Heart left ventricle (tissue), 16 donors: ENCODE measurements at regions of chr20 and their contacts with region 1.

Region 1: GRCh38 chr20:19692685-19693119 is 65.4 kb upstream of the RIN2 start:
- DNase-seq: peak; percentile 37 to 69 (median 52)
- ATAC-seq: peak in 2 of 4 donors; percentile 29 to 33
- H3K4me3 ChIP-seq: peak overlapping the region in 1 of 12 donors; percentile 12
- H3K27ac ChIP-seq: no peak overlapping the region
- H3K4me1 ChIP-seq: peaks cover 0 to 36% (median 15%) of the 10 kb centered on the region in 12 donors
- H3K27me3 ChIP-seq: no peaks in the 10 kb centered on the region
- CTCF ChIP-seq: peak; percentile 39 to 97 (median 92)
- POLR2A ChIP-seq: no peak

Region 2: GRCh38 chr20:19241440-19241839 is 451.3 kb before region 1 on chr20:
- intact Hi-C with region 1: no loop called
- DNase-seq: no peak
- ATAC-seq: no peak
- H3K4me3 ChIP-seq: no peak overlapping the region
- H3K27ac ChIP-seq: no peak overlapping the region
- H3K4me1 ChIP-seq: no peaks in the 10 kb centered on the region
- H3K27me3 ChIP-seq: peaks cover 0 to 12% (median 0%) of the 10 kb centered on the region in 9 donors
- CTCF ChIP-seq: no peak
- POLR2A ChIP-seq: no peak

Region 3: DNA sequence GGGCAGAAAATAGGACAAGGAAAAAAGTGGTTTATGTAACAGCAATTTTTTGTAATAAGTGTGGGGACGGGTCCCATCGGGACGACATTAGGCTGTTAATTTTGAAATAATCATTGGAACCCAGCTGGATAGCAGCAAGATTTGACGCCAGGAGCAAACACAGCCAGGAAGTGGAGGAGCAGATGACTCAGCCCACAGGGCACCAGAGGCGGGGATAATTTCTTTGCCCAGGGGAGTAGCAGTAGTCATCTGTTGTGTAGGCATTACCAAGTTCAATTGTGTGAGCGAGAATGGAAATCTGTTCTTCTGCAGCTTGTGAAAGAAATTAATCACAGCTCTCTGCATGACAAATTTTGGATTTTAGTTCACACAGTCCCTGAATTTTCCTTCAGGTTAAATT is 42.7 kb after region 1 on chr20:
- intact Hi-C with region 1: loop called in 2 of 10 experiments (anchors 5 kb)
- DNase-seq: peak; percentile 69 to 80 (median 75)
- ATAC-seq: peak; percentile 87 to 97 (median 94)
- H3K4me3 ChIP-seq: no peak overlapping the region
- H3K27ac ChIP-seq: peak overlapping the region in 11 of 12 donors; percentile 44 to 78 (median 63)
- H3K4me1 ChIP-seq: peaks cover 0 to 31% (median 16%) of the 10 kb centered on the region in 12 donors
- H3K27me3 ChIP-seq: no peaks in the 10 kb centered on the region
- CTCF ChIP-seq: no peak
- POLR2A ChIP-seq: no peak

Region 4: DNA sequence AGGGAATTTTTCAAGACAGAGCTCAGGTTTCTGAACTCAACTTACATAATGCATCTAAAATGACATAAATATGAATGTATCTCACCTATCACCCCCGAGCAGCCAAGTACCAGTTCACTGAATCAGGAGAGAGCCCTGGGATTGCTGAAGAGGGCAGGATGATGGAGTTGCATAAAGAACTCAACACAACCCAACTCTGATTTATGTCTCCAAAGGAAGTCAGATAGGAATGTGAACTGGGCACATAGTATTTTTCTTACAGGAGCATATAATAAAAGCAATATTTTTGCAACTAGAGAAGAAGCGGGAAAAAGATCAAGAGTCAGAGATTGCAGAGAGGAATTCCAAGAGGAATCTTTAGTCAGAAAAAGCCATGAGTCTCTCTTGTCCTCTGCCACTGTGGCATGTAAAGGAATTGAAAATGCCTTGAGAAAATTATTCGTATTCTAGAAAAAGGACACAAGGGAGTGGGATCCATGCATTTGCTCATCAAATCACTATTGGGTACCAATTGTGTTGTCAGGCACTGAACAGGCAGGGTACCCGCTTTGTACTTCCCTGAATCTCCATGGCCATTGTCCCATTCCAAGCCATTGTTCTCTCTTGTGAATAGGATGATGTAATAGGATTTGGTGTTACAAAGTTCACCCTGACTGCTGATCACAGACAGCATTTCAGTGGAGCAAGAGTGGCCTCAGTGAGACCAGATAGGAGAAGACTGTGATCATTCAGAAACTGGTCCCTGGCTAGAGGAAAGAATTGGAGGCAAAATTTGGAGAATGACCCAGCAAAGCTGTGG is 81.6 kb after region 1 on chr20:
- intact Hi-C with region 1: no loop called
- DNase-seq: peak in 1 of 5 donors; percentile 21
- ATAC-seq: peak in 3 of 4 donors; percentile 33 to 68 (median 54)
- H3K4me3 ChIP-seq: no peak overlapping the region
- H3K27ac ChIP-seq: peak overlapping the region in 9 of 12 donors; percentile 2 to 76 (median 29)
- H3K4me1 ChIP-seq: peaks cover 21 to 82% (median 57%) of the 10 kb centered on the region in 12 donors
- H3K27me3 ChIP-seq: no peaks in the 10 kb centered on the region
- CTCF ChIP-seq: no peak
- POLR2A ChIP-seq: no peak

Region 5: DNA sequence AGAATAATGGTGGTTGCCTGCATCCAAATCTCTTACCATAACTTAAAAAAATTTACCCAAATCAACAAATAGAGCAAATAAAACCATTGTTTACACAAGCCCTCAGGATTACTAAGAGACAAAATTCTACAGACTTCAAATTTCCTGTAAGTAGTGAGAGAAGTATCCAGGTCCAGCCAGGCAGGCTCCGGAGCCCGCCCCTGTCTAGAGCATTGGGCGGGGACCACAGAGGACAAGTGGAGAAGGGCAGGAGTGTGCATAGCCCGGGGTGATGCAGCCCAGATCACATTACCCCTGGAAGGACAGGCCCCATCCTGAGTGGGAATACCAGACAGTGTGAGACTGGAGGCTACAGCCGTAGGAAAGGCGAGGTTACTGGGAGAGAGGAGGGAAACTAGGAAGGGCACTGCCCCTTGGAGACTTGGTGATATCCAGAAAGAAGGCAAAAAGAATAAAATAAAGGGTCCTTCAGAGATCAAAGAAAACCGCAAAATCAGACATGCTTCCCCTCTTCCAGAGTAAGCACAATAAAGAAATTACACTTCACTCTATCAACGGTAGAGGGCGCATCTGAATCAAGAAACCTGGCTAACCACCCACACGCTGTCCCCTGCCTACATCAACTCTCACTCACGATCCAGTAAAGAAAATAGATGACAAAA is 91.9 kb after region 1 on chr20:
- intact Hi-C with region 1: loop called in 5 of 10 experiments (anchors 1 to 10 kb)
- DNase-seq: peak in 4 of 5 donors; percentile 64 to 78 (median 73)
- ATAC-seq: peak; percentile 67 to 79 (median 72)
- H3K4me3 ChIP-seq: peak overlapping the region in 2 of 12 donors; percentile 5 to 6
- H3K27ac ChIP-seq: peak overlapping the region; percentile 69 to 91 (median 84)
- H3K4me1 ChIP-seq: peaks cover 12 to 68% (median 46%) of the 10 kb centered on the region in 12 donors
- H3K27me3 ChIP-seq: no peaks in the 10 kb centered on the region
- CTCF ChIP-seq: peak; percentile 65 to 87 (median 81)
- POLR2A ChIP-seq: no peak

Region 6: GRCh38 chr20:19815553-19815991 is 122.9 kb after region 1 on chr20:
- intact Hi-C with region 1: no loop called
- DNase-seq: peak in 4 of 5 donors; percentile 55 to 70 (median 62)
- ATAC-seq: peak; percentile 78 to 96 (median 94)
- H3K4me3 ChIP-seq: no peak overlapping the region
- H3K27ac ChIP-seq: peak overlapping the region in 11 of 12 donors; percentile 35 to 78 (median 62)
- H3K4me1 ChIP-seq: peaks cover 2 to 54% (median 36%) of the 10 kb centered on the region in 12 donors
- H3K27me3 ChIP-seq: no peaks in the 10 kb centered on the region
- CTCF ChIP-seq: peak in 4 of 12 donors; percentile 10 to 34 (median 18)
- POLR2A ChIP-seq: no peak

Region 7: GRCh38 chr20:19889011-19889953 is 196.6 kb after region 1 on chr20:
- intact Hi-C with region 1: loop called in 5 of 10 experiments (anchors 2 to 10 kb)
- DNase-seq: peak; percentile 71 to 83 (median 76)
- ATAC-seq: peak; percentile 65 to 85 (median 74)
- H3K4me3 ChIP-seq: peak overlapping the region; percentile 3 to 61 (median 52)
- H3K27ac ChIP-seq: peak overlapping the region; percentile 71 to 97 (median 89)
- H3K4me1 ChIP-seq: peaks cover 10 to 86% (median 65%) of the 10 kb centered on the region in 12 donors
- H3K27me3 ChIP-seq: no peaks in the 10 kb centered on the region
- CTCF ChIP-seq: no peak
- POLR2A ChIP-seq: no peak

Region 8: DNA sequence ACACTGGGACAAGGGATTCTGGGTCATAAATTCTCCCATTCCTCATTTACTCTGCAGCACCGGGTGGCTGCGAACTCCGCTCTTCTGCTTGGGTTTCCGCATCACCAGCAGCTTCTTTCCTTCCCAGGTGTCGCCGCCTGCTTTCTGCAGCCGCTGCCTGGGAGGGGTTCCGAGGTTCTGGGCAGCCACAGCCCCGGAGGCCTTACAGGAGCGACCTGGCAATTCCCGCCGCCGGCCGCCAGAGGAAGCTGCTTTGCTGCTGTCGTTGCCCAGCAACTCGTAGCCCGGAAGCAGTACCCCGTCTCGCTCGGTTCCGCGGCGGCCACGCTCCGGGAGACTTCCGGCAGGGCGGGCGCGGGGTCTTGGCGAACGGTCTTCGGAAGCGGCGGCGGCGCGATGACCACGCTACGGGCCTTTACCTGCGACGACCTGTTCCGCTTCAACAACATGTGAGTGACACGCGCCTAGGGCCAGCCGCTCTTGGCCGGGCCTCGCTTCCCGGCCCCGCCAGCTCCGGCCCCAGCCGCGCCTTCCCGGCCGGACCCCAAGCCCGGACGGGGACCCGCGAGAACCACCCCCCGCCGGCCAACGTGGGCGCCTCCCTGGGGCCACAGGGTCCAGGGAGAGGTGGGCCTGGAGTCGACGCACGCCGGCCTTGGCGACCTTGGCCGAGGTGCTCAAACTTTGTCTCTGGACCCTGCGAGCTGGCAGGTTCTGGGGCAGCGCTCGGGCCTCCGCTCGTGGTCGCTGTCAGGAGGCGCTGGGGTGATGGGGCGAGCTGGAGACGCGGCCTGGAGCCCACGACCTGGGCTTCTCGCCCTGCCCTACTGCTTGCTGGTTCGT is 324.5 kb after region 1 on chr20 and contains the start of gene NAA20:
- intact Hi-C with region 1: loop called in 2 of 10 experiments (anchors 5 kb)
- DNase-seq: peak; percentile 95 to 96 (median 95)
- ATAC-seq: peak; percentile 96 to 99 (median 99)
- H3K4me3 ChIP-seq: peak within 1 kb of the TSS; percentile 71 to 99 (median 82)
- H3K27ac ChIP-seq: peak within 1 kb of the TSS; percentile 14 to 85 (median 76)
- H3K4me1 ChIP-seq: peaks cover 0 to 61% (median 28%) of the 10 kb centered on the region in 12 donors
- H3K27me3 ChIP-seq: no peaks in the 10 kb centered on the region
- CTCF ChIP-seq: peak; percentile 56 to 89 (median 79)
- POLR2A ChIP-seq: peak in 1 of 2 donors; percentile 49
- total RNA-seq, gene NAA20: 36.0 to 79.8 (median 59.1) TPM